IMR-90 (cell line): ENCODE measurements at regions of chr2 and their contacts with region 1.

Region 1: DNA sequence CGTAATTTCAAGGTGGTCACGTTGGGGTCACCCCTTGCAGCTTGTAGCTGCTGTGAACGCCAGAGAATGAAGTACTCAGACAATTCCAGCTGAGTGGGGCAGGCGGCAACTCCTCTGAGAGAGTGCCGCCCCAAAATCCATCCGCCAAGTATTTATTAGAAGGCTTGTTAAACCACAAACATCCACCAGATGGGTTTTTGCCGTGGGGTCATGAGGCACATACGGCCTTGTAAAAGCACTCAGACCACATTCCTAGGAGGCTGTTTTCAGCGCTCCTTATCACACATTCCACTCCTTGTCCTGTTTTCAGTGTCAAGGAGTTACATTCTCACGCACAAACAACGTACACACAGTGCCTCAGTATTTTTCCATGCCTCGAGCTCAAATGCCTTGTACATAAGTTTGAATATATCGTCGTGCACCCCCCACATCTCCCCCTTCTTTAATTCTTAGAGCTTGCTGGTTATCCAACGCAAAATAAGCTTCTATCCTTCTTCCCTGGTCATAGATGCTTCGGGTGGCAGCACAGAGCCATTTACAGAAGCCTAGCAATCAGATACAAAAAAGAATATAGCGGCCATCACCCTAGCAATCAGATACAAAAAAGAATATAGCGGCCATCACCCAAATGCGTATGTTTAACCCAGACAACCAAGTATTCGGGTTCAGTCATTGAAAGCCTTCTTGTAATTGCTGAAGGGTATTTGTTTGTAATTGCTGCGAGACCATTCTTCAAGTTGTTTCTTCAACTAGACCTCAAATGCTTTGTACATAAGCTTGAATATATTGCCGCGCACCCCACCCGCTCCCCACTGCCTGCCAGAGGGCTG is 7.3 kb downstream of the ALPP start:
- DNase-seq: peak; percentile 81
- ATAC-seq: peak; percentile 74
- H3K4me3 ChIP-seq: no peak overlapping the region
- H3K27ac ChIP-seq: no peak overlapping the region
- H3K4me1 ChIP-seq: peaks cover 3% of the 10 kb centered on the region; the same call in 1 of the 2 replicates
- H3K27me3 ChIP-seq: peaks cover 80% of the 10 kb centered on the region
- CTCF ChIP-seq: no peak
- POLR2A ChIP-seq: no peak
- RAD21 ChIP-seq: no peak

Region 2: GRCh38 chr2:231411831-231412617 is 973.9 kb before region 1 on chr2:
- CTCF ChIA-PET with region 1: no interaction called
- POLR2A ChIA-PET with region 1: no interaction called
- dilution Hi-C with region 1: no loop called
- in situ Hi-C with region 1: no loop called
- intact Hi-C with region 1: no loop called
- DNase-seq: peak; percentile 71
- ATAC-seq: peak; percentile 100
- H3K4me3 ChIP-seq: peak overlapping the region; percentile 63
- H3K27ac ChIP-seq: peak overlapping the region; percentile 42
- H3K4me1 ChIP-seq: 0 out of 2 replicates have a peak, but pooled peaks cover 3% of the 10 kb centered on the region
- H3K27me3 ChIP-seq: no peaks in the 10 kb centered on the region
- CTCF ChIP-seq: peak; percentile 98
- POLR2A ChIP-seq: no peak
- RAD21 ChIP-seq: peak; percentile 93

Region 3: GRCh38 chr2:232103140-232103737 is 282.6 kb before region 1 on chr2:
- CTCF ChIA-PET with region 1: no interaction called
- POLR2A ChIA-PET with region 1: no interaction called
- dilution Hi-C with region 1: no loop called
- in situ Hi-C with region 1: no loop called
- intact Hi-C with region 1: no loop called
- DNase-seq: no peak
- ATAC-seq: no peak
- H3K4me3 ChIP-seq: no peak overlapping the region
- H3K27ac ChIP-seq: no peak overlapping the region
- H3K4me1 ChIP-seq: no peaks in the 10 kb centered on the region
- H3K27me3 ChIP-seq: no peaks in the 10 kb centered on the region
- CTCF ChIP-seq: no peak
- POLR2A ChIP-seq: no peak
- RAD21 ChIP-seq: no peak

Region 4: GRCh38 chr2:232348936-232349335 is 36.9 kb before region 1 on chr2:
- CTCF ChIA-PET with region 1: no interaction called
- POLR2A ChIA-PET with region 1: no interaction called
- dilution Hi-C with region 1: no loop called
- in situ Hi-C with region 1: no loop called
- intact Hi-C with region 1: loop called (anchors 5 kb)
- DNase-seq: no peak
- ATAC-seq: no peak
- H3K4me3 ChIP-seq: no peak overlapping the region
- H3K27ac ChIP-seq: no peak overlapping the region
- H3K4me1 ChIP-seq: no peaks in the 10 kb centered on the region
- H3K27me3 ChIP-seq: peaks cover 45% of the 10 kb centered on the region
- CTCF ChIP-seq: no peak
- POLR2A ChIP-seq: no peak
- RAD21 ChIP-seq: no peak